Naive thymus-derived CD4-positive, alpha-beta T cell (primary cell): ENCODE measurements at regions of chr12 and their contacts with region 1.

Region 1: DNA sequence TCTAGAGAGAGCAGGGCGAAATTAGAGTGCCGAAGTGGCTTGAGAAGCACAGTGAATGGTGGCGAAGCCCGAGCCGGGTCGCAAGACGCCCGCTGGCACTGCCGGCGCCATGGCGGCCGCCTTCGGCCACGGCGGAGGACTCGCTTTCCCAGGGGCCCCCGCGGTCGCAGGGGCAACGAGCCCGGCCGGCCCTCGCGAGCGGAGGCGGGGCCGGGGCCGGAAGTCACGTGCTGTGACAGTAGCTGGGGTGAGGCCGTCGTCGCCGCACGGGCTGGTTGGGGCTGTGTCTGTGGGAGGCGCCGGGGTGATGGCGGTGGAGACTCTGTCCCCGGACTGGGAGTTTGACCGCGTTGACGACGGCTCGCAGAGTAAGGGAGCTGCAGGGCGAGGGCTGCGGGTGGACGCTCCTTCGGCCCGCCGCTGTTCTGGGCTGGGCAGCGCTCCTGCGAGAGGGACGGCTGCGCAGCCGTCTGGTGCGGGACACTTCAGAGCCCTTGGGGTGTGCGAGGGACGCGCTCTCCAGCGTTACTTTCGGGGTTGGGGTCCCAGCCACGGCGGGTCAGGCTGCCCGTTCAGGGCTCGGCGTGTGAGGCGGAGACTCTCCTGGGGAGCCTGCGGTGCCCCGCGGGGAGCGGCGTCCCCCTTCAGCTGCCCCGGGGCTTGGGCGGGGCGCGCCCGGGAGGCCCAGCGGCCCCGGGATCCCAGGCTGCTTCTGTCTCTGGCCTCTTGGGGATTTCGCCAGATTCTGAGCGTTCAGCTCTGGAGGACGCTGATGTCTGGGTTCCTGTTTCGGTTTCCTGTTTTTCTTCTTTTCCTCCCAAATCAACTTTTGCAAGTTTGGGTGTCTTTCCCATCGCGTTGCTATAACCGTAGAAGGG is at the start of gene WASHC4:
- DNase-seq: peak; percentile 87 to 97 (median 90)
- ATAC-seq: peak; percentile 99
- H3K4me3 ChIP-seq: peak within 1 kb of the TSS; percentile 68
- H3K4me3 Mint-ChIP-seq: peak within 1 kb of the TSS; percentile 89 to 99 (median 96)
- H3K27ac ChIP-seq: peak within 1 kb of the TSS; percentile 93
- H3K27ac Mint-ChIP-seq: peak within 1 kb of the TSS; percentile 77 to 96 (median 95)
- H3K4me1 ChIP-seq: peaks cover 13 to 16% of the 10 kb centered on the region in 2 donors
- H3K4me1 Mint-ChIP-seq: peaks cover 20 to 45% (median 38%) of the 10 kb centered on the region in 7 donors
- H3K27me3 ChIP-seq: no peaks in the 10 kb centered on the region
- H3K27me3 Mint-ChIP-seq: peaks cover 3 to 27% (median 22%) of the 10 kb centered on the region in 5 donors
- total RNA-seq, gene WASHC4: 43.2 to 76.8 (median 53.0) TPM

Region 2: GRCh38 chr12:103840876-103841689 is 1266.7 kb before region 1 on chr12 and contains the start of gene NT5DC3:
- CTCF ChIA-PET with region 1: no interaction called
- POLR2A ChIA-PET with region 1: no interaction called
- intact Hi-C with region 1: loop called in 1 of 2 experiments (anchors 1 kb)
- DNase-seq: peak; percentile 77 to 93 (median 87)
- ATAC-seq: peak; percentile 98
- H3K4me3 ChIP-seq: peak within 1 kb of the TSS; percentile 68
- H3K4me3 Mint-ChIP-seq: peak within 1 kb of the TSS; percentile 80 to 92 (median 86)
- H3K27ac ChIP-seq: peak within 1 kb of the TSS; percentile 55
- H3K27ac Mint-ChIP-seq: peak within 1 kb of the TSS in 8 of 9 donors; percentile 61 to 89 (median 76)
- H3K4me1 ChIP-seq: peaks cover 7 to 9% of the 10 kb centered on the region in 2 donors
- H3K4me1 Mint-ChIP-seq: peaks cover 5 to 26% (median 18%) of the 10 kb centered on the region in 7 donors
- H3K27me3 ChIP-seq: no peaks in the 10 kb centered on the region
- H3K27me3 Mint-ChIP-seq: peaks cover 0 to 35% (median 0%) of the 10 kb centered on the region in 5 donors
- total RNA-seq, gene NT5DC3: 3.9 to 5.0 (median 4.5) TPM

Region 3: DNA sequence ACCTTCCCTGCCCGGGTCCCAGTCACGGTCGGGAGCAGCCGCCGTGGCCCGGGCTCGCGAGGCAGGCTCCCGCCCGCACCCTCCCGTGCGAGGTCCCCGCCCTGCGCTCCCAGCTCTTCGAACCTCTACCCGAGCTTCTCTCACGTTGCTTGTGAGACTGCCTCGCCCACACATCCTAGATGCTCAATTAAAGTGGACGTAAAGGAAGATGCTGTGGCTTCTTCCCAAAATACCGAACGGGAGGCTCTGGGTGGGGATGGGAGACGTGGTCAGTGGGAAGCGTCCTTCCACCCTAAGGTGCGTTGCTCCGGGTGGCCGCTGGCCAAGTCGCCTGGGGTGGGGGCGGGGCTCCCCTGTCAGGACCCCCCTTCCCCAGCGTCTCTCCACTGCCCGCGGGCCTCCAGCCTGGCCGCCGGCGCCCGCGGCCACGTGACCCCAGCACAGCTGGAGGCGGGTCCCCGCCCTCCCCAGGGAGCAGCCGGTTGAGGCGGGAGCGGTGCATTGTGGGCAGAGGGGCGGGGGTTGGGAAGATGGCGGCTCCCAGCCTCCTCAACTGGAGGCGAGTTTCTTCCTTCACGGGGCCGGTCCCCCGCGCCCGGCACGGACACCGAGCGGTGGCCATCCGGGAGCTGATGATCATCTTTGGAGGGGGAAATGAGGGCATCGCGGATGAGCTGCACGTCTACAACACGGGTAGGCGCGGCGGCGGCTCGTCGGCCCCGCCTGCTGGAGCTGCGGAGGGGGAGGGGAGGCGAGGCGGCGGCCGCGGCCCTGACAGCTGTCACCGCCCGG is 1043.5 kb before region 1 on chr12 and contains the start of gene HCFC2:
- CTCF ChIA-PET with region 1: no interaction called
- POLR2A ChIA-PET with region 1: no interaction called
- intact Hi-C with region 1: loop called (anchors 5 to 10 kb)
- DNase-seq: peak; percentile 77 to 93 (median 83)
- ATAC-seq: peak; percentile 99
- H3K4me3 ChIP-seq: peak within 1 kb of the TSS; percentile 95
- H3K4me3 Mint-ChIP-seq: peak within 1 kb of the TSS; percentile 88 to 97 (median 94)
- H3K27ac ChIP-seq: peak within 1 kb of the TSS; percentile 79
- H3K27ac Mint-ChIP-seq: peak within 1 kb of the TSS; percentile 71 to 96 (median 90)
- H3K4me1 ChIP-seq: peaks cover 5 to 9% of the 10 kb centered on the region in 2 donors
- H3K4me1 Mint-ChIP-seq: peaks cover 13 to 31% (median 21%) of the 10 kb centered on the region in 7 donors
- H3K27me3 ChIP-seq: no peaks in the 10 kb centered on the region
- H3K27me3 Mint-ChIP-seq: peaks cover 5 to 27% (median 13%) of the 10 kb centered on the region in 5 donors
- total RNA-seq, gene HCFC2: 11.4 to 20.2 (median 16.2) TPM

Region 4: DNA sequence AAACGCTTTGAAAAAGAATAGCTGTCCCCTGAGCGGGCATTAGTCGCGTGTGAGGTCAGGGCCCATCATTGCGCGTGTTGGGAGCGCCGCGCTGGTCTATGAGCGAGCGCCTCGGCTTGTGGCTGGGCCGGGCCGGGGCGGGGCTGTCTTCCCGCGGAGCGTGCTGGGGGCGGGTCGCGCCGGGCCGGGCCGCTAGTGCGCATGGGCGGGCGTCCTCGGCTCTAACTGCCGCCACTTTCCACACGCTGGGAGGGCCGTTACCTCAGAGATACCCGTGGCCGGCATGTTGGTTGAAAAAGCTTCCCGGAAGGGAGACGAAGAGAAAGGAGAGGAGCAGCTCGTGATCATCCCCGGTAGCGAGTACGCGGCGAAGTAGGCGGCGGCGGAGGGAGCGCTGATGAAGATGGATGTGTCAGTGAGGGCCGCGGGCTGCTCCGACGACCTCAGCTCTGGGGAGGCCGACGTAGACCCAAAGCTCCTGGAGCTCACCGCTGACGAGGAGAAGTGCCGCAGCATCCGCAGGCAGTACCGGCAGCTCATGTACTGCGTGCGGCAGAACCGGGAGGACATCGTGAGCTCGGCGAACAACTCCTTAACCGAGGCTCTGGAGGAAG is 804.1 kb before region 1 on chr12 and contains the start of gene EID3:
- CTCF ChIA-PET with region 1: no interaction called
- POLR2A ChIA-PET with region 1: no interaction called
- intact Hi-C with region 1: loop called (anchors 1 to 5 kb)
- DNase-seq: peak; percentile 86 to 96 (median 91)
- ATAC-seq: peak; percentile 99
- H3K4me3 ChIP-seq: peak within 1 kb of the TSS; percentile 56
- H3K4me3 Mint-ChIP-seq: peak within 1 kb of the TSS; percentile 87 to 99 (median 96)
- H3K27ac ChIP-seq: peak within 1 kb of the TSS; percentile 84
- H3K27ac Mint-ChIP-seq: peak within 1 kb of the TSS; percentile 91 to 99 (median 97)
- H3K4me1 ChIP-seq: peaks cover 7 to 24% of the 10 kb centered on the region in 2 donors
- H3K4me1 Mint-ChIP-seq: peaks cover 35 to 72% (median 56%) of the 10 kb centered on the region in 7 donors
- H3K27me3 ChIP-seq: no peaks in the 10 kb centered on the region
- H3K27me3 Mint-ChIP-seq: no peaks in the 10 kb centered on the region
- total RNA-seq, gene EID3: 8.2 to 11.8 (median 10.4) TPM

Region 5: DNA sequence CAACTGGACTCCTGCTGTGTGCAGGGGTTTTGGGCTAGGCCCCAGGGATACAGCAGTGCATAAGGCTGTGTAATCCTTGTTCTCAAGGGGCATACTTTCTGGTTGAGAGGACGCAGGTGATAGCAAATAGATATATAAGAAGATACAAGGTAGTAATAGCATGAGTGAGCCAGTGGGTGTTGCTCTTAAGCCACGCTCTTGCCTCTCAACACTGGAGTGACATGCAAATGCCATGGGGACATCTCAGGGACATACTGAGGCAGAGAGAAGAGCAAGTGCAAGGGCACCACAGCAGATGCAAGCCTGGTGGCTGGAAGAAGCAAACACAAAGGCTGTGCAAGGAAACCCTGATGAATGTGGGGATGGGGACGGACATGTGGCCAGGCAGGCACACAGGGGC is 427.7 kb before region 1 on chr12:
- CTCF ChIA-PET with region 1: no interaction called
- POLR2A ChIA-PET with region 1: no interaction called
- intact Hi-C with region 1: loop called in 1 of 2 experiments (anchors 5 kb)
- DNase-seq: peak in 7 of 9 donors; percentile 15 to 51 (median 30)
- ATAC-seq: peak; percentile 44
- H3K4me3 ChIP-seq: no peak overlapping the region
- H3K4me3 Mint-ChIP-seq: peak overlapping the region in 3 of 10 donors; percentile 16 to 36 (median 26)
- H3K27ac ChIP-seq: no peak overlapping the region
- H3K27ac Mint-ChIP-seq: peak overlapping the region in 3 of 9 donors; percentile 15 to 80 (median 26)
- H3K4me1 ChIP-seq: peaks cover 25 to 46% of the 10 kb centered on the region in 2 donors
- H3K4me1 Mint-ChIP-seq: peaks cover 36 to 80% (median 46%) of the 10 kb centered on the region in 7 donors
- H3K27me3 ChIP-seq: no peaks in the 10 kb centered on the region
- H3K27me3 Mint-ChIP-seq: no peaks in the 10 kb centered on the region

Region 6: GRCh38 chr12:105084251-105085250 is 23.2 kb before region 1 on chr12 and contains the start of gene ALDH1L2:
- CTCF ChIA-PET with region 1: no interaction called
- POLR2A ChIA-PET with region 1: no interaction called
- intact Hi-C with region 1: loop called (anchors 1 kb)
- DNase-seq: peak in 3 of 9 donors; percentile 12 to 73 (median 20)
- ATAC-seq: peak; percentile 88
- H3K4me3 ChIP-seq: peak within 1 kb of the TSS; percentile 35
- H3K4me3 Mint-ChIP-seq: peak within 1 kb of the TSS; percentile 67 to 84 (median 78)
- H3K27ac ChIP-seq: no peak within 1 kb of the TSS
- H3K27ac Mint-ChIP-seq: peak within 1 kb of the TSS in 1 of 9 donors; percentile 67
- H3K4me1 ChIP-seq: peaks cover 0 to 8% of the 10 kb centered on the region in 2 donors
- H3K4me1 Mint-ChIP-seq: peaks cover 7 to 14% (median 12%) of the 10 kb centered on the region in 7 donors
- H3K27me3 ChIP-seq: peaks cover 8 to 14% of the 10 kb centered on the region in 2 donors
- H3K27me3 Mint-ChIP-seq: peaks cover 33 to 43% (median 37%) of the 10 kb centered on the region in 5 donors
- total RNA-seq, gene ALDH1L2: 0.24 to 0.42 (median 0.34) TPM in 4 of 5 experiments, not detected in the other

Region 7: DNA sequence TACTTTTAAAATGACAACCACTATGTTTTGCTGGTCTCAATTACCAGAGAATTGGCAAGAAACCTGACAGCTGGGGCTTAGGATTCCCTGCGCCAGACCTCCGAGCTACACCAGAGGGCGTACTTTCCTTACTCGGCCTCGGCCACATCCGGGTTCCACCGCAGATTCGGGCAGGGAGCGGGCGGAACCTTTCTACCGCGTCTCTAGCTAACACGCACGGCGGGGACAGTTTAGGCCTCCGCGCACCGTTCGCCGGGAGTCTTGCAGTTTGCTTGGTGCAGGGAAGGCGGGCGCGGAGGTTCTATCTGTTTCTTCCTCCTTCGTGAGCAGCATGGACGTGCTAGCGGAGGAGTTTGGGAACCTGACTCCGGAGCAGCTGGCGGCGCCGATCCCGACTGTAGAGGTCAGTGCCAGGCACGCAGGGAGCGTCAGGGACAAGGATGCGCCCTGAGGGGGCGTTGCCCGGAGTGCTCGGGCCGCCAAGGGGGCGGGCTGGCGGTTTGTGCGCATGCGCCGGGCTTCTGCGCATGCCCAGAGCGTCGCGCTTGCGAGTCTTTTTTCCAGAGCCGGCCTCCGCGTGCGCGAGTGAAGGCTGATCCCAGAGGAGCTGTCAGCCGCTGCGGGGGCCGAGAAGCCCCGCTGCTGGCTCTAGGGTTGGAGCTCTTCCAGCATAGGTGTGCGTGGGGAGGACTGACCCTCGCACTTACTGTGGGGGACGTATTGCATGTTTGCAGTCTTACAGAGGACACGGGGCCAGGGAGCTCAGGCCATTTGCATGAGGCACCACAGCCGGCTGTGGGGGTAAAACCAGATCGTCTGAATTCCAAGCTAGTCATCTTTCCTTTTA is 1250.0 kb after region 1 on chr12 and contains the start of gene POLR3B:
- CTCF ChIA-PET with region 1: no interaction called
- POLR2A ChIA-PET with region 1: interaction called, 3 read pairs
- intact Hi-C with region 1: loop called (anchors 1 to 5 kb)
- DNase-seq: peak; percentile 95 to 99 (median 98)
- ATAC-seq: peak; percentile 98
- H3K4me3 ChIP-seq: peak within 1 kb of the TSS; percentile 96
- H3K4me3 Mint-ChIP-seq: peak within 1 kb of the TSS; percentile 81 to 97 (median 92)
- H3K27ac ChIP-seq: peak within 1 kb of the TSS; percentile 74
- H3K27ac Mint-ChIP-seq: peak within 1 kb of the TSS; percentile 85 to 95 (median 91)
- H3K4me1 ChIP-seq: peaks cover 6 to 12% of the 10 kb centered on the region in 2 donors
- H3K4me1 Mint-ChIP-seq: peaks cover 11 to 22% (median 17%) of the 10 kb centered on the region in 7 donors
- H3K27me3 ChIP-seq: no peaks in the 10 kb centered on the region
- H3K27me3 Mint-ChIP-seq: no peaks in the 10 kb centered on the region
- total RNA-seq, gene POLR3B: 4.7 to 8.7 (median 6.8) TPM